HCT116 (cell line): ENCODE measurements at regions of chr1 and their contacts with region 1.

Region 1: GRCh38 chr1:206663832-206664652 is 20.7 kb upstream of the MAPKAPK2 start:
- DNase-seq: peak; percentile 62
- ATAC-seq: peak; percentile 88
- H3K4me3 ChIP-seq: no peak overlapping the region
- H3K27ac ChIP-seq: no peak overlapping the region
- H3K4me1 ChIP-seq: no peaks in the 10 kb centered on the region
- H3K27me3 ChIP-seq: peaks cover 18% of the 10 kb centered on the region; the same call in 1 of the 2 replicates
- CTCF ChIP-seq: peak; percentile 76 to 91 (median 87)
- POLR2A ChIP-seq: no peak
- RAD21 ChIP-seq: peak; percentile 87

Region 2: GRCh38 chr1:206479183-206480125 is 184.6 kb before region 1 on chr1:
- CTCF ChIA-PET with region 1: interaction called, 13 read pairs
- POLR2A ChIA-PET with region 1: no interaction called
- RAD21 ChIA-PET with region 1: no interaction called
- intact Hi-C with region 1: no loop called
- DNase-seq: no peak
- ATAC-seq: peak; percentile 89
- H3K4me3 ChIP-seq: no peak overlapping the region
- H3K27ac ChIP-seq: no peak overlapping the region
- H3K4me1 ChIP-seq: peaks cover 0 to 6% of the 10 kb centered on the region in 2 experiments; a peak in 1 of 4 replicates
- H3K27me3 ChIP-seq: no peaks in the 10 kb centered on the region
- CTCF ChIP-seq: peak; percentile 73 to 87 (median 77); a peak in 5 of 6 replicates
- POLR2A ChIP-seq: no peak
- RAD21 ChIP-seq: peak; percentile 83

Region 3: GRCh38 chr1:206489980-206490770 is 173.9 kb before region 1 on chr1:
- CTCF ChIA-PET with region 1: interaction called, 27 read pairs
- POLR2A ChIA-PET with region 1: no interaction called
- RAD21 ChIA-PET with region 1: interaction called in 1 of 2 experiments, 5 read pairs
- intact Hi-C with region 1: loop called (anchors 1 kb)
- DNase-seq: no peak
- ATAC-seq: peak; percentile 96
- H3K4me3 ChIP-seq: no peak overlapping the region
- H3K27ac ChIP-seq: no peak overlapping the region
- H3K4me1 ChIP-seq: no peaks in the 10 kb centered on the region
- H3K27me3 ChIP-seq: no peaks in the 10 kb centered on the region
- CTCF ChIP-seq: peak; percentile 94 to 98 (median 94)
- POLR2A ChIP-seq: no peak
- RAD21 ChIP-seq: peak; percentile 99

Region 4: DNA sequence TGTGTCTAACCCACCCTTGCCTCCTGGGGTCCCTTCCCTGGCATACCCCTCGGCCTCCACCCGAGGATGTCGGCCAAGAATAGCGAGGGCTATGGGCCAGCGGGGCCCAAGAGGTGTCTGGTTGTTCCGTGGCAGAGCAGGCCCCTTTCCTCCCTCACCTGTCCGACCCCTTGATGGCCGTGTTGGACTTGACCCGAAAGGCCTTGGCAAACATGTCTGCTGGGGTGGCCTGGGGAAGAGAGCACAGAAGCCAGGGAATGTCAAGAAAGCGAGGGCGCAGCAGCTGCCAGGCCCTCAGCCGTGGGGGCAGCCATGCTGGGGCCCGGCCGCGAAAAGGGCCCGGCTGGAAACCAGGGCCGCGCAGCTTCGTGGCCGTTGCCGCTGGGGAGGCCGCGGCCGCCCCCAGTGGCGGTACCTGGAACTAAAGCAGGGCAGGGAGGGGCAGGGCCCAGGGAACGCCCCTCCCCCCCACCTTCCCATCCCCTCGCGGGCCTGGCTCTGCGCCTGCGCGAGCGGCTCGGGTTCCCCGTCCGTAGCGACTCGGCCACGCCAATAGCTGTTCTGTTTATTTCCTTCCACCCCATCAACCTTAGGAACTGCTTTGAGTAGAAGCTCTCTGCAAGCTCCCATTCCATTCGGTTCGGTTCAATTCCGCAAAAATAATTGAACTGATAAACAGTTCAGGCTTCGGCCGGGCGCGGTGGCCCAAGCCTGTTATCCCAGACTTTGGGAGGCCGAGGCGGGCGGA is 51.7 kb before region 1 on chr1 and contains the start of gene EIF2D:
- CTCF ChIA-PET with region 1: interaction called, 44 read pairs
- POLR2A ChIA-PET with region 1: interaction called, 5 read pairs
- RAD21 ChIA-PET with region 1: interaction called in 1 of 2 experiments, 3 read pairs
- intact Hi-C with region 1: loop called (anchors 1 kb)
- DNase-seq: peak; percentile 79
- ATAC-seq: peak; percentile 94
- H3K4me3 ChIP-seq: peak within 1 kb of the TSS; percentile 95 to 96
- H3K27ac ChIP-seq: peak within 1 kb of the TSS; percentile 74
- H3K4me1 ChIP-seq: peaks cover 8 to 12% of the 10 kb centered on the region in 2 experiments; a peak in 2 of 4 replicates
- H3K27me3 ChIP-seq: no peaks in the 10 kb centered on the region
- CTCF ChIP-seq: peak; percentile 79 to 95 (median 79)
- POLR2A ChIP-seq: peak; percentile 86
- RAD21 ChIP-seq: no peak
- total RNA-seq, gene EIF2D: 54.8 TPM

Region 5: DNA sequence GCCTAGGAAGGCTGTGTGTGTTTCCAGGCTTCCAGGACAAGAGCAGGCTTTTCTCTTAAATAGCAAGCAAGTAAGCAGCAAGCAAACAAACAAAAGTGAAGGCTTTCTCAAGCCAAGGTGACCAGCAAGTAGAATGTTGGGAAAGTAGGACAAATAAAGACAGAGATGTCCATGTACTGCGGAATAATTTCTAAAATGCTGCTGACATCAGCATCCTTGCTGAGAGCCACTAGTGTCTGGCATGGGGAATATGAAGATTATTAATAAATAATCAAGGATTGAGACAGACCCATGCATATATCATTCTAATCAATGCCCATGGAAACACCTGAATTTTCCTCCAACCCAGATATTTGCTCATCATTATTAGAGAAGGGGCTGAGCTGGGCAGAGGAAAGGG is 35.1 kb before region 1 on chr1:
- CTCF ChIA-PET with region 1: interaction called, 71 read pairs
- POLR2A ChIA-PET with region 1: interaction called, 4 read pairs
- RAD21 ChIA-PET with region 1: interaction called, 5 to 11 read pairs
- intact Hi-C with region 1: loop called (anchors 1 kb)
- DNase-seq: no peak
- ATAC-seq: no peak
- H3K4me3 ChIP-seq: no peak overlapping the region
- H3K27ac ChIP-seq: no peak overlapping the region
- H3K4me1 ChIP-seq: peaks cover 0 to 6% of the 10 kb centered on the region in 2 experiments; a peak in 2 of 4 replicates
- H3K27me3 ChIP-seq: no peaks in the 10 kb centered on the region
- CTCF ChIP-seq: no peak
- POLR2A ChIP-seq: no peak
- RAD21 ChIP-seq: no peak

Region 6: DNA sequence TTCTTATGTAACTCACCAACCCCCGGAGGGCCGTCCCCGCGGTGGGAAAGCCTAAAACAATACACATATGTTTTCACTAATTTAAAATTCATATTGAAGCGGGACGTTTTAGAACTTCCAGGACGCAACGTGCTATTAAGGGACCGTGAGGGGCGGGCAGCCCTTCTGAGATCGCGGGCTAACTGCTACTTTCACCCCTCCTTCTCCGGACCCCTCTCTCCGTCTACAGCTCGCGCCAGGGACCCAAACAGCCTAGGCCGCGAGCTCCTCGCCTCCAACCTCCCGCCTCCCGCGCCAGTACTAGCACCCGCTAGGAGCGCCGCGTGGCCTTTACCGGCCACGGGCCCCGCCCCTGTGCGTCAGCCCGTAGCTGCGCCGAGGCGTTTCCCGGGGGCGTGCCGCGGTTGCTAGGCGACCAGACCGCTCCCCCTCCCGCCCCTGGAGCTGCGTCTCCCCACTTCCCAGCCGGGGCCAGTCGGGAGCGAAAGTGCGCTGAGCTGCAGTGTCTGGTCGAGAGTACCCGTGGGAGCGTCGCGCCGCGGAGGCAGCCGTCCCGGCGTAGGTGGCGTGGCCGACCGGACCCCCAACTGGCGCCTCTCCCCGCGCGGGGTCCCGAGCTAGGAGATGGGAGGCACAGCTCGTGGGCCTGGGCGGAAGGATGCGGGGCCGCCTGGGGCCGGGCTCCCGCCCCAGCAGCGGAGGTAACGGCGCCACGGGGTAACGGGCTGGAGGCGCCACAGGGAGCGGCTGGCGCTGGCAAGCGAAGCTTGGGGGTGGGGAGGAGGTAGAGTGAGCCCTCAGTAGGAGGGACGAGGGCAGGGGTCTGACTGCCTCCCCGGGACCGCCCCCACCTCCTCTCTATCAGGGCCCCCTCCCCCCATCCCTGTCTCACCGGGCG is 28.7 kb before region 1 on chr1 and contains the start of gene DYRK3:
- CTCF ChIA-PET with region 1: interaction called, 71 read pairs
- POLR2A ChIA-PET with region 1: interaction called, 11 read pairs
- RAD21 ChIA-PET with region 1: interaction called, 9 to 11 read pairs
- intact Hi-C with region 1: loop called (anchors 1 kb)
- DNase-seq: peak; percentile 72
- ATAC-seq: peak; percentile 91
- H3K4me3 ChIP-seq: peak within 1 kb of the TSS; percentile 67 to 78
- H3K27ac ChIP-seq: peak within 1 kb of the TSS; percentile 32; the same call in 1 of the 2 replicates
- H3K4me1 ChIP-seq: peaks cover 4 to 26% of the 10 kb centered on the region in 2 experiments; a peak in 3 of 4 replicates
- H3K27me3 ChIP-seq: no peaks in the 10 kb centered on the region
- CTCF ChIP-seq: no peak
- POLR2A ChIP-seq: peak; percentile 89
- RAD21 ChIP-seq: no peak
- total RNA-seq, gene DYRK3: 7.1 TPM

Region 7: GRCh38 chr1:206674745-206675175 is 10.7 kb after region 1 on chr1:
- CTCF ChIA-PET with region 1: interaction called, 21 read pairs
- POLR2A ChIA-PET with region 1: no interaction called
- RAD21 ChIA-PET with region 1: no interaction called
- intact Hi-C with region 1: no loop called
- DNase-seq: no peak
- ATAC-seq: 0 out of 2 replicates have a peak, but pooled peaks have one; percentile 20
- H3K4me3 ChIP-seq: no peak overlapping the region
- H3K27ac ChIP-seq: no peak overlapping the region
- H3K4me1 ChIP-seq: peaks cover 0 to 3% of the 10 kb centered on the region in 2 experiments; a peak in 1 of 4 replicates
- H3K27me3 ChIP-seq: no peaks in the 10 kb centered on the region
- CTCF ChIP-seq: no peak
- POLR2A ChIP-seq: no peak
- RAD21 ChIP-seq: no peak